Caco-2 (cell line): ENCODE measurements at regions of chr7 and their contacts with region 1.

Region 1: GRCh38 chr7:116984917-116985316 is 31.6 kb downstream of the ST7 start:
- DNase-seq: peak in 1 of 2 experiments; percentile 21
- H3K4me3 ChIP-seq: no peak overlapping the region
- H3K4me3 Mint-ChIP-seq: no peak overlapping the region
- H3K27ac Mint-ChIP-seq: no peak overlapping the region
- H3K4me1 ChIP-seq: peaks cover 3% of the 10 kb centered on the region; the same call in 1 of the 2 replicates
- H3K4me1 Mint-ChIP-seq: no peaks in the 10 kb centered on the region
- H3K27me3 ChIP-seq: no peaks in the 10 kb centered on the region
- H3K27me3 Mint-ChIP-seq: no peaks in the 10 kb centered on the region
- CTCF ChIP-seq: peak; percentile 57 to 60

Region 2: GRCh38 chr7:116970238-116970910 is 14.5 kb before region 1 on chr7:
- CTCF ChIA-PET with region 1: no interaction called
- POLR2A ChIA-PET with region 1: no interaction called
- intact Hi-C with region 1: no loop called
- DNase-seq: no peak
- H3K4me3 ChIP-seq: no peak overlapping the region
- H3K4me3 Mint-ChIP-seq: no peak overlapping the region
- H3K27ac Mint-ChIP-seq: no peak overlapping the region
- H3K4me1 ChIP-seq: no peaks in the 10 kb centered on the region
- H3K4me1 Mint-ChIP-seq: peaks cover 17% of the 10 kb centered on the region
- H3K27me3 ChIP-seq: no peaks in the 10 kb centered on the region
- H3K27me3 Mint-ChIP-seq: no peaks in the 10 kb centered on the region
- CTCF ChIP-seq: no peak

Region 3: DNA sequence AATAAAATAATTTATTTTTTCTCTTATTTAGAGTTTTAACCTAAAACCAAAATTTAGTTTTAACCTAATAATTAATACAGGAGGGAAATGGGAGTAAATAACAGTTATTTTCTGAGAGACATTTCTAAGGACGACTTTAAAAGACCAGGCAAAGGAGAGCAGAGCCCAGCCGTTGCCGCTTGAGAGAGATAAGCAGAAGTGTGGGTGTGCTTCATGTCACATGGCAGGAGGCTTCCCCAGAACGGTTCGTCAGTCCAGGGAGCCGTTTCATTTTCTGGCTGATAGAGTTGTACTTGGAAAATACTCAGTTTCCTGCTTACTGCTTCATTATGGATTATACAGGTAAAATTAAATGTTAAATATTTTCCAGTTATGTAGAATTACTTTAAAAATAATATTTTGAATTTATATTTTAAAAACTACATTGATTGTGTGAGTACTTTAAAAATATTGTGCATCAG is 29.8 kb after region 1 on chr7:
- CTCF ChIA-PET with region 1: no interaction called
- POLR2A ChIA-PET with region 1: no interaction called
- intact Hi-C with region 1: loop called (anchors 2 kb)
- DNase-seq: no peak
- H3K4me3 ChIP-seq: no peak overlapping the region
- H3K4me3 Mint-ChIP-seq: no peak overlapping the region
- H3K27ac Mint-ChIP-seq: no peak overlapping the region
- H3K4me1 ChIP-seq: no peaks in the 10 kb centered on the region; the same call in 1 of the 2 replicates
- H3K4me1 Mint-ChIP-seq: peaks cover 14% of the 10 kb centered on the region
- H3K27me3 ChIP-seq: no peaks in the 10 kb centered on the region
- H3K27me3 Mint-ChIP-seq: no peaks in the 10 kb centered on the region
- CTCF ChIP-seq: no peak

Region 4: DNA sequence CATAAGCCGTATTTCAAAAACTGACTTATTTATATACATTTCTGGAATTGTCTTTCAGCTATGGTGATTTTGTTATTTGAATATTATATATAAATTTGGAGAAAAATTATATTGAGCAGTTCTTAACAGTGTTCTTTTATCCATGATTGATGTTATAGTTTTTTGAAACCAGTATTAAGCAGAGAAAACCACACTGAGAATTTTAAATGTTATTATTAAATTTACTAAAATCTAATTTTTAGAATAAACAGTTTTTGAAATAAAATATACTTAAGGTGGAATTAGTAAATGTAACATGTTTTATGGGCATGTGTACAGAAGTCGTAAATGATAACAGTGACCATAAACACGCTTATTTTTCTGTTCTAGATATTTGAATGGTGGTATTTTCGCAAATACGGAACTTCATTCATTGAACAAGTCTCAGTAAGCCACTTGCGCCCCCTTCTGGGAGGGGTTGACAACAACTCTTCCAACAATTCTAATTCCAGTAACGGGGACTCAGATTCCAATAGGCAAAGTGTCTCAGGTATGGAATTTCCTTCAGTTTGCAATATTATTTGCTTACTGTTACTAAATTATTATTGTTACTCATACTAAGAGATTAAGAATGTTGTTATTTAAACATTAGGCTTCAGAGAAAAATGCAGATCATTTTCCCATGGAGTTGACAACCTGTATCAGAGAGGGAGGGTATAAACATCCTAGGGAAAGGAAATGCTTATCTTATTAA is 134.4 kb after region 1 on chr7:
- CTCF ChIA-PET with region 1: interaction called, 3 read pairs
- POLR2A ChIA-PET with region 1: no interaction called
- intact Hi-C with region 1: loop called (anchors 1 kb)
- DNase-seq: peak; percentile 70 to 85
- H3K4me3 ChIP-seq: no peak overlapping the region
- H3K4me3 Mint-ChIP-seq: no peak overlapping the region
- H3K27ac Mint-ChIP-seq: no peak overlapping the region
- H3K4me1 ChIP-seq: no peaks in the 10 kb centered on the region
- H3K4me1 Mint-ChIP-seq: no peaks in the 10 kb centered on the region
- H3K27me3 ChIP-seq: no peaks in the 10 kb centered on the region
- H3K27me3 Mint-ChIP-seq: no peaks in the 10 kb centered on the region
- CTCF ChIP-seq: peak; percentile 80 to 85

Region 5: DNA sequence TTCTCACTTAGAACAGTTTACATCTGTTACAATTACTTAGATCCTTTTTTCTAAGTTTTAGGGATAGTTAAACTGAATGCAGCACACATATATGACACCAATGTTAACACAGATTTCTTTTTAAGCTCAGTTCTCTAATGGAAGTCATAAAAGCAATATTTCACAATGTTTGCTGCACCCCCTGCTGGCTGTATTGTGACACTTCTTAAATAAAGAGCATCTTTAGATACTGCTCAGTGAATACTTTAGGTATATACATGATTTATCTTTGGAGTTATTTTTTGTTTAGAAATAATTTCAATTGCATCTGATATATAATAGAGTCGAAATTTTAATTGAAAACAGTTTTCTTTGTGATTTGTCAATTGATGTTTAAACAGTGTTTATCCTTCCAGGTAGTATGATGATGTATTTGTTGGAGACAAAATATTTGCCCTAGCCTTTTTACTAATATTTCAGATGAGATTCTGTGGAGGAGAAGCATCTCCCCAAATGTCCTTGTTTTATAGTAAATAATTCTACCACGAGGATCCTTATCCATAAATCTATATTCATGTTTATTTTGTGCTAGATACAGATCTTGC is 142.8 kb after region 1 on chr7:
- CTCF ChIA-PET with region 1: interaction called, 20 read pairs
- POLR2A ChIA-PET with region 1: no interaction called
- intact Hi-C with region 1: loop called (anchors 1 kb)
- DNase-seq: peak in 1 of 2 experiments; percentile 49
- H3K4me3 ChIP-seq: no peak overlapping the region
- H3K4me3 Mint-ChIP-seq: no peak overlapping the region
- H3K27ac Mint-ChIP-seq: no peak overlapping the region
- H3K4me1 ChIP-seq: no peaks in the 10 kb centered on the region
- H3K4me1 Mint-ChIP-seq: no peaks in the 10 kb centered on the region
- H3K27me3 ChIP-seq: no peaks in the 10 kb centered on the region
- H3K27me3 Mint-ChIP-seq: no peaks in the 10 kb centered on the region
- CTCF ChIP-seq: peak; percentile 82